Right ventricle myocardium inferior (tissue), 1 donor: ENCODE measurements at regions of chr1 and their contacts with region 1.

Region 1: GRCh38 chr1:162056043-162056442 is 13.4 kb upstream of the NOS1AP start:
- DNase-seq: no peak
- ATAC-seq: peak; percentile 86

Region 2: GRCh38 chr1:162276493-162276892 is 220.4 kb after region 1 on chr1:
- intact Hi-C with region 1: loop called (anchors 1 kb)
- DNase-seq: no peak
- ATAC-seq: no peak

Region 3: GRCh38 chr1:162391790-162392563 is 335.9 kb after region 1 on chr1:
- intact Hi-C with region 1: loop called (anchors 2 kb)
- DNase-seq: no peak
- ATAC-seq: no peak